CD8-positive, alpha-beta T cell (primary cell): ENCODE measurements at regions of chr1 and their contacts with region 1.

Region 1: GRCh38 chr1:18100491-18101063 is 7.0 kb upstream of the IGSF21 start:
- DNase-seq: peak in 7 of 9 experiments; percentile 5 to 54 (median 39)
- ATAC-seq: no peak
- H3K4me3 ChIP-seq: no peak overlapping the region
- H3K4me3 Mint-ChIP-seq: no peak overlapping the region
- H3K27ac ChIP-seq: no peak overlapping the region
- H3K27ac Mint-ChIP-seq: no peak overlapping the region
- H3K4me1 ChIP-seq: no peaks in the 10 kb centered on the region
- H3K4me1 Mint-ChIP-seq: no peaks in the 10 kb centered on the region
- H3K27me3 ChIP-seq: peaks cover 0 to 4% of the 10 kb centered on the region in 2 experiments
- H3K27me3 Mint-ChIP-seq: peaks cover 27% of the 10 kb centered on the region
- CTCF ChIP-seq: peak; percentile 65

Region 2: DNA sequence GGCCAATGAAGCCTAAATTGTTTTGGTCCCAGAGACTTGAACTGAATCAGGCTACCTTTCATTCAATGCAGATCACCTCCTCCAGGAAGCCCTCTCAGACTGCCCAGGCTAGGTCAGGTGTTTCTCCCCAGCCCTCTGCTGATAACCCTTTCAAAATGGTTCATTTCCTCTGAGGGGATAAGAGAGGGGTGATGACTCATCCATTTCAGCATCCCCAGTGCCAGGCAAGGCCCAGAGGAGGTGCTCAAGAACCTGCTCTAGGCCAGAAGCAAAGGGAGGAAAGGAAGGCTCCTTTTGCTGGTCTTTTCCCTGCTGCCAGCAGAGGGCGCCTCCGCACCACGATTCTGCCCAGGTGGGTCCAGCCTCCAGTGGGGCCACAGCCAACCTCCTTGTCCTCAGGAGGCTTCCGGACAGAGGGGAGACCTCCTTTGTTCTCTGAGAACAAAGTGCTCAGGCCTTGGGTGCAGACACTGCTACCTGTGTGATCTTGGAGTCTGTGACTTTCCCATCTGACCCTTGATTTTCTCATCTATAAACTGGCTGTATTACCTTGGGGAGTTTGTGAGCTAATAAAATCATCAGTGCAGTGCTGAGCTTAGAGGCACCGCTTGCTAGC is 606.4 kb before region 1 on chr1:
- CTCF ChIA-PET with region 1: interaction called, 3 read pairs
- POLR2A ChIA-PET with region 1: no interaction called
- intact Hi-C with region 1: loop called in 1 of 2 experiments (anchors 5 kb)
- DNase-seq: peak; percentile 26 to 72 (median 59)
- ATAC-seq: peak; percentile 72
- H3K4me3 ChIP-seq: no peak overlapping the region
- H3K4me3 Mint-ChIP-seq: no peak overlapping the region
- H3K27ac ChIP-seq: no peak overlapping the region
- H3K27ac Mint-ChIP-seq: no peak overlapping the region
- H3K4me1 ChIP-seq: no peaks in the 10 kb centered on the region
- H3K4me1 Mint-ChIP-seq: no peaks in the 10 kb centered on the region
- H3K27me3 ChIP-seq: no peaks in the 10 kb centered on the region
- H3K27me3 Mint-ChIP-seq: peaks cover 9% of the 10 kb centered on the region
- CTCF ChIP-seq: peak; percentile 84

Region 3: GRCh38 chr1:17922833-17923232 is 177.7 kb before region 1 on chr1:
- CTCF ChIA-PET with region 1: interaction called, 7 read pairs
- POLR2A ChIA-PET with region 1: no interaction called
- intact Hi-C with region 1: loop called in 1 of 2 experiments (anchors 1 kb)
- DNase-seq: peak in 1 of 9 experiments; percentile 15
- ATAC-seq: no peak
- H3K4me3 ChIP-seq: no peak overlapping the region
- H3K4me3 Mint-ChIP-seq: no peak overlapping the region
- H3K27ac ChIP-seq: no peak overlapping the region
- H3K27ac Mint-ChIP-seq: no peak overlapping the region
- H3K4me1 ChIP-seq: no peaks in the 10 kb centered on the region
- H3K4me1 Mint-ChIP-seq: peaks cover 3% of the 10 kb centered on the region
- H3K27me3 ChIP-seq: no peaks in the 10 kb centered on the region
- H3K27me3 Mint-ChIP-seq: peaks cover 37% of the 10 kb centered on the region
- CTCF ChIP-seq: peak; percentile 22

Region 4: GRCh38 chr1:18116777-18117176 is 16.2 kb after region 1 on chr1:
- CTCF ChIA-PET with region 1: interaction called, 10 read pairs
- POLR2A ChIA-PET with region 1: no interaction called
- intact Hi-C with region 1: no loop called
- DNase-seq: no peak
- ATAC-seq: no peak
- H3K4me3 ChIP-seq: no peak overlapping the region
- H3K4me3 Mint-ChIP-seq: no peak overlapping the region
- H3K27ac ChIP-seq: no peak overlapping the region
- H3K27ac Mint-ChIP-seq: no peak overlapping the region
- H3K4me1 ChIP-seq: no peaks in the 10 kb centered on the region
- H3K4me1 Mint-ChIP-seq: no peaks in the 10 kb centered on the region
- H3K27me3 ChIP-seq: no peaks in the 10 kb centered on the region
- H3K27me3 Mint-ChIP-seq: peaks cover 47% of the 10 kb centered on the region
- CTCF ChIP-seq: no peak